Mammary epithelial cell (primary cell): ENCODE measurements at regions of chr4 and their contacts with region 1.

Region 1: DNA sequence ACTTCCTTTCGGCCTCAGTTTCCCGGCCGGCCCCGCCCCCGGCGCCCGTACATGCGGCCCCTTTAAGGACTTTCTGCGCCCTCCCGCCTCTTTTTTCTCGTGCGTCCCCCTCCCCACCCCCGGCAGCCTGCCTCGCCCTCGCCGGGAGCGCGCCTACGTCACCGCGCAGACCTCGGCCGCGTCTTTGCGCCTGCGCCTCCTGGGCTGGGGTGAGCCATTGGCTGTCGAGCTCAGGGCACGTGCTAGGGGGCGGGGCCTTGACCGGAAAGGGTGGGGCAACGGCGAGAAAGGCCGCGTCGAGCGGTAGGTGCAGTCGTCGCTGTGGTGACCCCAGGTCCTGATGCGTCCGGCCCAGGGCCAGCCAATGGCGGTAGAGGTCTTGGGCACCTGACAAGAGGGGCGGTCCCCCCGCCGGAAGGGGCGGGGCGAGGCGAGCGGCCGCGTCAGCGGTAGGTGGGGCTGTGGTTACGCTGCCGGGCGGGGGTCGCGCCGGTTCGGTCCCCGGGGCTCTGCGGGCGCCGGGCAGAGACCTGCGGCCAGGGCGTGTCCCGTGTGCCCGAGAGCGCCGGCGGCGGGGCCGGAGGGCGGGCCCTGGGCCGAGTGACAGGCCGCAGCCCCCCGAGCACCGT is at the start of gene UVSSA:
- DNase-seq: peak; percentile 100
- H3K4me3 ChIP-seq: peak within 1 kb of the TSS; percentile 80 to 89 (median 87)
- H3K27ac ChIP-seq: peak within 1 kb of the TSS; percentile 89
- H3K4me1 ChIP-seq: peaks cover 25% of the 10 kb centered on the region
- H3K27me3 ChIP-seq: no peaks in the 10 kb centered on the region
- CTCF ChIP-seq: no peak
- total RNA-seq, gene UVSSA: 11.8 to 33.2 TPM

Region 2: DNA sequence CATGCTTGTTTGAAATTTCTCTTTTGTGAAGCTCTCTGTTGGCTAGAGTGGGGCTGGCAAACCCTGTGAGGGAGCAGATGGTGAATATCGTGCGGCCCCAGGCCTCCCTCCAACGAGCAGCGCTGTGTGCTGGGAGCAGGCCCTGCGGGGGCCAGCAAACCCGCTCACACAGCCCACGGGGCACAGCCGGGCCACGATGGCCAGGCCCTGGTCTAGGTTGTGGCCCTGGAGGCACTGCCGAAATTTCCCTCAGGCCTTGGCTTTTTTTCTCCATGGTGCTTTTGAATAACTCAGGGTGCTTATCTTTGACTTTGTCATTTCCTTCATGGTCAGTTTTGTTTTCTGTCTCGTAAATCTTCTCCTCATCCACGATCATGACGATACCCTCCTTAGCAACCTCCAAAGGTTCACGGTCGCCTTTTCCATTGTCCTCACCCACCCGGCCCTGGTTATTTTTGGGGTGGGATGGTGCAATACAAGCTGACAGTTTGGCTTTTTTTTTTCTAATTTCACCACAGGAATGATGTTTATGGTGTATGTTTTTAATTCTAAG is 620.6 kb before region 1 on chr4:
- CTCF ChIA-PET with region 1: no interaction called
- dilution Hi-C with region 1: no loop called
- in situ Hi-C with region 1: no loop called
- intact Hi-C with region 1: no loop called
- DNase-seq: no peak
- H3K4me3 ChIP-seq: no peak overlapping the region
- H3K27ac ChIP-seq: no peak overlapping the region
- H3K4me1 ChIP-seq: no peaks in the 10 kb centered on the region
- H3K27me3 ChIP-seq: no peaks in the 10 kb centered on the region
- CTCF ChIP-seq: no peak

Region 3: DNA sequence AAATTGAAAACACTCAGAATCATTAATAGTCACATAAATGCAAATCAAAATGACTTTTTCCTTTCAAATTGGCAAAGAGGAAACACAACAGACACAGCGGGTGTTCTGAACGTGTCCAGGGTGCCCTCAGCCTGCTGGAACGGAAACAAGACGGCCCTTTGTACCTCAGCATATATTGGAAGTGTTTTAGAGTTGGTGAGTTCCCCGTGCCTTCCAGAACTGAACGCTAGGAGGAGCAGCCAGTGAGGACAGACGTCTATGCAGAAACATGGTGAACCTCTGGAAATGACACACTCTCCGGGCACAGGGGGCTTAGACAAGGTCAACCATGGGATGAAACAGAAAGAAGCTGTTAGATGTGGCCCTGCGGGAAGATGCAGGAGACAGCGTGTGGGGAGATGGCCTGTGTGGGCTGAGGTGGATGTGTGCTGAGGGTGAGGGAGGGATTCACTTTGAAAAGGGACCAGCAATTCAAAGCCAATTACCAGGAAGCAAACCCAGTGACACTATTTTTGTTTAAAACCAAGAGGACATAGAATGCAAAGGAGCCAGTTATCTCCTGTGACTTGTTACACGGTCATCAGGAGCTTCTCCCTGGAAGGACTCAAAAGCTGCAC is 274.0 kb before region 1 on chr4:
- CTCF ChIA-PET with region 1: no interaction called
- dilution Hi-C with region 1: no loop called
- in situ Hi-C with region 1: no loop called
- intact Hi-C with region 1: loop called (anchors 5 kb)
- DNase-seq: peak; percentile 55
- H3K4me3 ChIP-seq: no peak overlapping the region
- H3K27ac ChIP-seq: no peak overlapping the region
- H3K4me1 ChIP-seq: no peaks in the 10 kb centered on the region
- H3K27me3 ChIP-seq: no peaks in the 10 kb centered on the region
- CTCF ChIP-seq: peak; percentile 76 to 87

Region 4: DNA sequence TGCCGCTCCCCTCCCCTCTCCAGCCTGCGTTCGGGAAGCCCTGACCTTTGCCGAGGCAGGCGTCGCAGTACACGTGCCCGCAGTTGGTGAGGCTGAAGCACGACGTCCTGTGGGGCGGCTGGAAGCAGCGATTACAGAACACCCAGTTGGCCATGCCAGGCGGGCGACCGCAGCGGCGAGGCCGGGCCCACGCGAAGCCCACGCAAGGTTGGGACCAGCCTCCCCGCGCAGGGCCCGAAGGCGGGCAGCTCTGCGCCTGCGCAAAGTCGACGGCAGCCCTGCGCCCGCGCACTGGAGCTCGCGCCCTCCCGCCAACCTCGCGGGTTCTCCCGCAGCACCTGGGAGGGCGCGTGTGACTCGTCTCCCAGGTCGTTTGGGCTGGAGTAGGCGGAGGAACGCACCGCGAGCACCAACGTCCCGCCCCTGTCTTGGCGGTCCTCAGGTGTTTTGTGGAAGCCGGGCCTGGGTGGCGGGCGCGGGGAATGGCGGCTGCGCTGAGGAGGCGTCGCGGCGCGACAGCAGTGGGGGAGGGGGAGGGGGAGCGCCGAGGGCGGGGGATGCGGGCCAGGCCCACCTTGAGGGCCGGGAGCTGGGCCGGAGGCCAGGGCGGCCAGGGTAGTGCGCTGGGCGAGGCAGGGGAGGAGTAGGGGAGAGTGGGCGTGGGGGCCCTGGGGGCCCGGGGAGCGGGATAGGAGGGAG is 233.4 kb before region 1 on chr4 and contains the start of gene RNF212:
- CTCF ChIA-PET with region 1: no interaction called
- dilution Hi-C with region 1: no loop called
- in situ Hi-C with region 1: no loop called
- intact Hi-C with region 1: no loop called
- DNase-seq: no peak
- H3K4me3 ChIP-seq: peak within 1 kb of the TSS in 2 of 3 experiments; percentile 40 to 42
- H3K27ac ChIP-seq: no peak within 1 kb of the TSS
- H3K4me1 ChIP-seq: peaks cover 4% of the 10 kb centered on the region
- H3K27me3 ChIP-seq: no peaks in the 10 kb centered on the region
- CTCF ChIP-seq: no peak
- total RNA-seq, gene RNF212: 0.33 to 2.2 TPM

Region 5: DNA sequence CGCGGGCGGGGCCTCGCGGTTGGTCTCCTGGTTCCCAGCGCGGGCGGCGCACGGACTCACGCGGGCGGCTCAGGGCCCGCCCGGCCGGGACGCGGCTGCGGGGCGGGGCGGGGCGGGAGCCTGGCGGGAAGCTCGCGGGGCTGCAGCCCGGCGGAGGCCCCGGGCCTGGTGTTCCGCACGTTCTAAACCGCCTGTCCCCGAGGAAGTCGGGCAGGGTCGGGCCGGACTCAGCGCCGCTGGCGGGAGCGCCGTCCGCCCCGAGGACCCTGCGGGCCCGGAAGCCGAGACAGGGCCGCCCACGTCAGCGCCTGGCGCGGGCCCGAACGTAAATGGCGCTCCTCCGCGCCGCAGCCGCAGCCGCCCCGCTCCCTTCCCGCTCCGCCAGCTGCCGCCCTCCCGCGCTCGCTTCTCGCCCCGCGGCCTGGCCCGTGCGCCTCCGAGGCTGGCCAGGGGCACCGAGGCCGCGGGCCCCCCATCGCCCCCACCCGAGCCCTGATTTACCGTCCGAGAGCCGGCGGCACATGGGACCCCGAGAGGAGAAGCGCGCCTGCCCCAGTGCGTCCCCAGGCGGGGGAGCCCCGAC is 97.7 kb before region 1 on chr4:
- CTCF ChIA-PET with region 1: no interaction called
- dilution Hi-C with region 1: no loop called
- in situ Hi-C with region 1: no loop called
- intact Hi-C with region 1: loop called (anchors 1 kb)
- DNase-seq: peak; percentile 81
- H3K4me3 ChIP-seq: peak overlapping the region; percentile 54 to 62 (median 55)
- H3K27ac ChIP-seq: peak overlapping the region; percentile 54
- H3K4me1 ChIP-seq: peaks cover 32% of the 10 kb centered on the region
- H3K27me3 ChIP-seq: no peaks in the 10 kb centered on the region
- CTCF ChIP-seq: no peak

Region 6: DNA sequence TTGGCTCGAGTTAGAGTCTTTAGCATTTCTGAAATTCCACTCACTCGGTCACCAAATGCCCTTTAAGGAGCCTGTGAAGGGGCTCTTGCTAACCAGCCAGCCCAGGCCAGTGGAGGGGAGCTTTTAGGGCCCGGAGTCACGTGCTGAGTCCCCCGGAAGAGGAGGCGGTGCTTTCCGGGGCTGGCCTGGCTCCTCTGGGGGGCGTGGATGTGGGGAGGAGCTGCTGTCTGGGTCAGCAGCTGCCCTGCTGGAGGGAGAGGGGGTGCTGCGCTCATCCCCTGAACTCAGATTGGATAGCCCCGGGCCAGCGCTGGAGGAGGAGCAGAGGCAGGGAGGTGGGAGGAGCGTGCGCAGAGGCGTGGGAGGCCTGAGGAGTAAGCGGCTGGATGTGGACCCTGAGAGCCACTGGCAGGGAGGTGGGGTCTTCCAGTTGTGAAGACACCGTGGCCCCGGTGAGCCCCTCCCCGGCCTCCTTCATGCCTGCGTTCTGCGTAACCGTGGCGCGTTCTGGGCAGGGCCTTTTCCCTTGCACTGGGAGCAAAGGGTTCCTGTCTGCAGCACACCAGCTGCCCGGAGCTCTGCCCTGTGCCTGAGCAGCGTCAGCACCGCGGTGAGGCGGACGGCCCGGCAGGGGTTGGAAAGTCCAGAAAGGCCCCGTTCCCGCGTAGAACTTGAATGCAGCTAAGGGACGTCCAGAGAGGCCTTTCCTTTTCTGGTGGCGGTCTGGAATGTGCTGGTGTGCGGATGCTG is 37.5 kb before region 1 on chr4:
- CTCF ChIA-PET with region 1: interaction called, 4 read pairs
- dilution Hi-C with region 1: loop called (anchors 5 kb)
- in situ Hi-C with region 1: no loop called
- intact Hi-C with region 1: loop called (anchors 2 kb)
- DNase-seq: peak; percentile 88
- H3K4me3 ChIP-seq: peak overlapping the region; percentile 51 to 56 (median 53)
- H3K27ac ChIP-seq: peak overlapping the region; percentile 50
- H3K4me1 ChIP-seq: peaks cover 47% of the 10 kb centered on the region
- H3K27me3 ChIP-seq: no peaks in the 10 kb centered on the region
- CTCF ChIP-seq: no peak

Region 7: DNA sequence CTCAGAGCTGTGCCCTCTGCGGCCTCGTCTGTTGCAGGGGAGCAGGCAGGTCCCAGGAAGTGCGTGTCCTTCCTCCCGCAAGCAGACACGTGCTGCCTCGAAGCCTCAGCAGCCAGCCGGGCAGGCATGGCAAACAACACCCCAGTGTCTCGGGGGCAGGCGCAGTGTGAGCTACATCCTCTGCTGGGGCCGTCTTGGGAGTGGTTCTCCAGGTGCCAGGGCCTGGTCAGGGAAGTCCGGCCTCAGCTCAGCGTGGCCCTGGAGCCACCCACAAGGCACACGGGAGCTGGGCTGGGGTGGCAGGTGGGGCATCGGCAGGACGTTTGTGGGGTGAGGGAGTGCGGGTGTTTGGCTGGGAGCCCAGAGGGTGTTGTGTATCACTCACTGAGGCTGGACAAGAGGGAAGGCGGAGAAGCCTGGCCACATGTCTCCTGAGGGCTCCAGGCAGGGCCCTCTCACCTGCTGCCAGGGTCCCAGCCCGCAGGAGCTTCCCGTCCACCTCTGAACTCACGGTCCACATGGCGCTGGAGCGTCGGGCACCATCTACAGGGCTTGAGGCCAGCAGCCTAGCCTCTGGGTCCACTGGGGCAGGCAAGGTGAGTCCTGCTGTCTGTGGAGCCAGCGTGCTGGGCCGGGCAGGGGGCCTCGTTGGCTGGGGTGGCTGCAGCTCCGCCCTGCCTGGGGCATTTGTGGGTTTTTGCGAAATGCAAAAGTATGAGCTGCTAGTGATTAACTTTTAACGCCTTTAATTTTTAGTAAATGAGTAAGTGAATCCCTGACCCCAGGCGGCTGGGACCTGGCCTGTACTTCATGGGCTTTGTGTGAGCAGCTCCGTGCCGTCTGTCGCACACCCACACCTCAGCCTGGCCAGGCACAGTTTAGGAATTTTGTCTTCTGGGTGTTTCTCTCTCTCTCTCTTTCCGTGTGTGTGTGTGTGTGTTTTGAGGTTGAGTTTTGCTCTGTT is 17.2 kb before region 1 on chr4:
- CTCF ChIA-PET with region 1: no interaction called
- dilution Hi-C with region 1: no loop called
- in situ Hi-C with region 1: no loop called
- intact Hi-C with region 1: loop called (anchors 1 kb)
- DNase-seq: peak; percentile 94
- H3K4me3 ChIP-seq: no peak overlapping the region
- H3K27ac ChIP-seq: peak overlapping the region; percentile 69
- H3K4me1 ChIP-seq: peaks cover 40% of the 10 kb centered on the region
- H3K27me3 ChIP-seq: no peaks in the 10 kb centered on the region
- CTCF ChIP-seq: no peak

Region 8: DNA sequence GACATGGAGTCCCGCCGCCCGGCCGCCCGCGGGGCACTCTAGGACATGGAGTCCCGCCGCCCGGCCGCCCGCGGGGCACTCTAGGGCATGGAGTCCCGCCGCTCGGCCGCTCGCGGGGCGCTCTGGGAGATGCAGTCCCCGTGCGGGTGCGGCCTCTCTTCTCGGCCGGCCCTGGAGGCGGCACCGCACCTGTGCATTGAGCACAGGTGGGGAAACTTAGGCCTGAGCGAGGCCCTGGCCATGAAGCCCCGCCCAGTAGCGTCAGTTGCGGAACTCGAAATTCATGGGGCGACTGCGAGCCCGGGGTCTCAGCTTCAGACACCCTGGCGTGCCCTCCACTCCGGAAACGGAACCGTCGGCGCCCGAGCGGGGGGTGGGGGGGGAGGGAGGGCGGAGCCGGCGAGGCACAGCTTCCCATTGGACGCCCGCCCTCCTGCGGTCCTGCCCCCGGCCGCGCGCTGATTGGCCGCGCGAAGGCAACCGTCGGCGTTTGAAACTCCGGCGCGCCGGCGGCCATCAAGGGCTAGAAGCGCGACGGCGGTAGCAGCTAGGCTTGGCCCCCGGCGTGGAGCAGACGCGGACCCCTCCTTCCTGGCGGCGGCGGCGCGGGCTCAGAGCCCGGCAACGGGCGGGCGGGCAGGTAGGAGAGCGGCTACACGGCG is 374.2 kb after region 1 on chr4 and contains the starts of genes TACC3 and TMEM129:
- CTCF ChIA-PET with region 1: no interaction called
- dilution Hi-C with region 1: no loop called
- in situ Hi-C with region 1: no loop called
- intact Hi-C with region 1: loop called (anchors 10 kb)
- DNase-seq: peak; percentile 98
- H3K4me3 ChIP-seq: peak within 1 kb of the TSS; percentile 78 to 96 (median 89)
- H3K27ac ChIP-seq: peak within 1 kb of the TSS; percentile 29
- H3K4me1 ChIP-seq: peaks cover 26% of the 10 kb centered on the region
- H3K27me3 ChIP-seq: no peaks in the 10 kb centered on the region
- CTCF ChIP-seq: no peak
- total RNA-seq, gene TACC3: 2.3 to 73.0 TPM
- total RNA-seq, gene TMEM129: 31.7 to 52.7 TPM